Sigmoid colon (tissue), 7 donors: ENCODE measurements at regions of chr21 and their contacts with region 1.

Region 1: GRCh38 chr21:26106562-26106961 is 64.0 kb downstream of the APP start:
- DNase-seq: no peak
- H3K4me3 ChIP-seq: no peak overlapping the region
- H3K27ac ChIP-seq: no peak overlapping the region
- H3K4me1 ChIP-seq: peaks cover 0 to 7% (median 0%) of the 10 kb centered on the region in 4 donors
- H3K27me3 ChIP-seq: no peaks in the 10 kb centered on the region
- CTCF ChIP-seq: no peak
- EP300 ChIP-seq: no peak
- POLR2A ChIP-seq: no peak

Region 2: DNA sequence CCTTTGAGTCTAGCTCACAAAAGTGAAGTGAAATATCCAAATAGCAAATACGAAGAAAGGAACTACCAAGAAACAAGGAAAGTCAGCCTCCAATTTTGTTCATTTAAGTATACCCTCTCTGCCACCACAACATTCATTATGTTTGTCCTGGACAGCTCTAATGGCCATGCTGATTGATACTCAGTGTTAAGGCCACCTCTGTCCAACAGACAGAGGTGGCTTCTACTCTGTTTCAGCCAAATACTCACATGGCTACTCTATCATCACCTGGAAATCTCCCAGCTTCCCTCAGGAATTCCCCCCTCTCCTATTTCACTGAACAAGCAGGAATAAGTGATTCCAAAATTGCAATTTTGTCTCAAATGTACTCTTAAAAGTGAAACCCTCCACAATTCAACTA is 53.3 kb after region 1 on chr21:
- intact Hi-C with region 1: loop called (anchors 5 kb)
- DNase-seq: no peak
- H3K4me3 ChIP-seq: no peak overlapping the region
- H3K27ac ChIP-seq: no peak overlapping the region
- H3K4me1 ChIP-seq: peaks cover 0 to 25% (median 5%) of the 10 kb centered on the region in 4 donors
- H3K27me3 ChIP-seq: no peaks in the 10 kb centered on the region
- CTCF ChIP-seq: no peak
- EP300 ChIP-seq: no peak
- POLR2A ChIP-seq: no peak

Region 3: GRCh38 chr21:26177187-26177586 is 70.6 kb after region 1 on chr21:
- intact Hi-C with region 1: no loop called
- DNase-seq: no peak
- H3K4me3 ChIP-seq: no peak overlapping the region
- H3K27ac ChIP-seq: no peak overlapping the region
- H3K4me1 ChIP-seq: no peaks in the 10 kb centered on the region
- H3K27me3 ChIP-seq: no peaks in the 10 kb centered on the region
- CTCF ChIP-seq: no peak
- EP300 ChIP-seq: no peak
- POLR2A ChIP-seq: no peak